ENCODE measurements at regions of chr4 and their contacts with region 1.

Region 1: GRCh38 chr4:128287871-128288688 is 467 bp upstream of the PGRMC2 start:
- DNase-seq: peak; percentile 97 to 99 (median 99)
- H3K4me3 ChIP-seq: peak overlapping the region; percentile 71 to 81 (median 73)
- H3K4me3 Mint-ChIP-seq: peak overlapping the region; percentile 88 to 94
- H3K27ac ChIP-seq: peak overlapping the region; percentile 77 to 83
- H3K27ac Mint-ChIP-seq: peak overlapping the region; percentile 82 to 95 (median 94)
- H3K4me1 ChIP-seq: peaks cover 20 to 33% of the 10 kb centered on the region in 2 donors
- H3K4me1 Mint-ChIP-seq: peaks cover 29% of the 10 kb centered on the region
- H3K27me3 ChIP-seq: no peaks in the 10 kb centered on the region
- H3K27me3 Mint-ChIP-seq: peaks cover 0 to 5% (median 2%) of the 10 kb centered on the region in 3 donors
- CTCF ChIP-seq: no peak

Region 2: GRCh38 chr4:127632420-127633403 is 655.4 kb before region 1 on chr4 and contains the start of gene INTU:
- intact Hi-C with region 1: loop called in 1 of 2 experiments (anchors 10 kb)
- DNase-seq: peak; percentile 59 to 85 (median 81)
- H3K4me3 ChIP-seq: peak within 1 kb of the TSS; percentile 63 to 95 (median 94)
- H3K4me3 Mint-ChIP-seq: peak within 1 kb of the TSS; percentile 95 to 99
- H3K27ac ChIP-seq: peak within 1 kb of the TSS in 1 of 2 donors; percentile 38
- H3K27ac Mint-ChIP-seq: peak within 1 kb of the TSS in 6 of 7 donors; percentile 22 to 87 (median 80)
- H3K4me1 ChIP-seq: peaks cover 12 to 23% of the 10 kb centered on the region in 2 donors
- H3K4me1 Mint-ChIP-seq: peaks cover 22% of the 10 kb centered on the region
- H3K27me3 ChIP-seq: no peaks in the 10 kb centered on the region
- H3K27me3 Mint-ChIP-seq: peaks cover 1 to 4% (median 3%) of the 10 kb centered on the region in 3 donors
- CTCF ChIP-seq: no peak
- polyA plus RNA-seq, gene INTU: 0.17 to 0.26 TPM in 2 of 3 donors, not detected in the other

Region 3: GRCh38 chr4:127965062-127965802 is 322.8 kb before region 1 on chr4 and contains the starts of genes ABHD18 and MFSD8:
- intact Hi-C with region 1: loop called in 1 of 2 experiments (anchors 5 kb)
- DNase-seq: peak; percentile 100
- H3K4me3 ChIP-seq: peak within 1 kb of the TSS; percentile 83 to 96 (median 92)
- H3K4me3 Mint-ChIP-seq: peak within 1 kb of the TSS; percentile 94
- H3K27ac ChIP-seq: peak within 1 kb of the TSS; percentile 91 to 97
- H3K27ac Mint-ChIP-seq: peak within 1 kb of the TSS; percentile 91 to 97 (median 96)
- H3K4me1 ChIP-seq: peaks cover 12 to 17% of the 10 kb centered on the region in 2 donors
- H3K4me1 Mint-ChIP-seq: peaks cover 26% of the 10 kb centered on the region
- H3K27me3 ChIP-seq: no peaks in the 10 kb centered on the region
- H3K27me3 Mint-ChIP-seq: no peaks in the 10 kb centered on the region
- CTCF ChIP-seq: peak; percentile 45
- polyA plus RNA-seq, gene ABHD18: 6.1 to 9.5 (median 6.4) TPM
- polyA plus RNA-seq, gene MFSD8: 7.0 to 15.8 (median 14.2) TPM

Region 4: DNA sequence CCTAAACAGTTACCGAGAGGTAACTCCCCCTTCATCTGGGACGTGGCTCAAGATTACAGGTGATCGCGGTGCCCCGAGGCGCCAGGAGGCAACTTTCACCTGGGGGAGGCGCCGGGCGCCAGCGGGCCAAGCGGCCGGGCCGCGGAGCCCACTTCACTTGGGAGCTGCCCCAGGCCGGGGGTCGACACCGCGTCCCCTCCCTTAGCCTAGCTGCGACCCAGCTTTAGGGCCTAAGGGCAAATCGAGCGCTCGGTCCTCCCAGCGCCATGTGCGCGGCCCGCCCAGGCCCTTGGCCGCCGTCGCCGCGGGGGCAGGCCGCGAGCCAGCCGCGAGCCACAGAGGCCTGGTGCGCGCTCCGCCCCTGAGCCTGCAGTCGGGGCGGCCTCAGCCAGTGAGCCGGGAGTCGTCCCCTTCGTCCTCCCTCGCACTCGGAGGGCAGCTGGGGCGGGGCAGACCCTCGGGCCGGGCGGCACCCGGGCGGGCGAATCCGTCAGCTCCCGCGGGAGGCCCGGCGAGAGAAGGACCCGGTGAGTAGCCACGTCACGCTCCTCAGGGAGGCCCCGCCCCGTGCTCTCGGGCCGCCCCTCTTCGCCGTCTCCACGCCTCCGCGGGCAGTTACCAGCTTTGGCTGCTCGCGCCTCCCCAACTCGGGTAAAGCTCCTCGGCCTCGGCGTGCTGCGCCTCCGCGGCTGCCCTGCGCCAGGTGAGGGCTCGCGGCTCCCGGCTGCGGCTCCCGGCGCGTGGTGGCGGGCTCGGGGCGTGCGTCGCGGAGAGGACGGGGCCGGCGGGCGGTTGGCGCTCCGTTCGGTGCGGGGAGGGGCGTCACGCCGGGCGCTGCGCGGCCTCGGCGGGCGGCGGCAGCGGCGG is 227.1 kb before region 1 on chr4 and contains the start of gene LARP1B:
- intact Hi-C with region 1: loop called in 1 of 2 experiments (anchors 5 kb)
- DNase-seq: peak; percentile 85 to 89 (median 85)
- H3K4me3 ChIP-seq: peak within 1 kb of the TSS; percentile 51 to 82 (median 52)
- H3K4me3 Mint-ChIP-seq: peak within 1 kb of the TSS; percentile 85 to 92
- H3K27ac ChIP-seq: peak within 1 kb of the TSS; percentile 55 to 75
- H3K27ac Mint-ChIP-seq: peak within 1 kb of the TSS; percentile 71 to 92 (median 87)
- H3K4me1 ChIP-seq: peaks cover 10 to 20% of the 10 kb centered on the region in 2 donors
- H3K4me1 Mint-ChIP-seq: peaks cover 13% of the 10 kb centered on the region
- H3K27me3 ChIP-seq: no peaks in the 10 kb centered on the region
- H3K27me3 Mint-ChIP-seq: peaks cover 0 to 5% (median 2%) of the 10 kb centered on the region in 3 donors
- CTCF ChIP-seq: no peak
- polyA plus RNA-seq, gene LARP1B: 3.0 to 5.7 (median 3.7) TPM

Region 5: DNA sequence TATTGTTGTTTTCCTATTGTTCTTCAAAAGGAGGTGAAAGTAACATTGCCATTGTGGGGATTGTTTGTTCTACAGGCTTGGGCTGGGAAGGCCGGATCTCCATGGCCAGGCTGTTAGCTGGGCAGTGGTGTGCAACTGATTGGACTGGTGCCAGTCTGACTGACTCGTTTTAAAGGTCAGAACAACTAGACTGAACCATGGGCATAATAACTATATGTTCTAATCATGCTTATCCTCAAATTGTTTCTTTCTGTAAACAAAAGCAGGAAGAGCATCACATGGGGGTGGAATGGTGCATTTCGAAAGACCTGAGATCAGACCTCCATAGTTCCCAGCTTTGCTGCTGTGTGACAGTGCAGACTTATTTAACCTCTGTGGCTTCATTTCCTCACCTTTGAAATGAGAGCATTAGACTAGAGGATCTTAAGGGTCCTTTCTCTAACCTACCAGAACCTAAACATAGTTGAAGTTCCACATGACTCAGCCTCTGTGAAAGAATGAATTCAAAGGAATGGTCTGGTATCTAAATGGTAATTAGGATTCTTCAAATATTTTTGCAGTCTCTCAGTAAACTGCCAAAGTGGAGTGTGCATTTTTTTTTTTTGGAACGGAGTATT is 66.2 kb after region 1 on chr4:
- intact Hi-C with region 1: no loop called
- DNase-seq: no peak
- H3K4me3 ChIP-seq: no peak overlapping the region
- H3K4me3 Mint-ChIP-seq: no peak overlapping the region
- H3K27ac ChIP-seq: no peak overlapping the region
- H3K27ac Mint-ChIP-seq: no peak overlapping the region
- H3K4me1 ChIP-seq: no peaks in the 10 kb centered on the region
- H3K4me1 Mint-ChIP-seq: no peaks in the 10 kb centered on the region
- H3K27me3 ChIP-seq: no peaks in the 10 kb centered on the region
- H3K27me3 Mint-ChIP-seq: peaks cover 0 to 3% (median 0%) of the 10 kb centered on the region in 3 donors
- CTCF ChIP-seq: no peak

Region 6: DNA sequence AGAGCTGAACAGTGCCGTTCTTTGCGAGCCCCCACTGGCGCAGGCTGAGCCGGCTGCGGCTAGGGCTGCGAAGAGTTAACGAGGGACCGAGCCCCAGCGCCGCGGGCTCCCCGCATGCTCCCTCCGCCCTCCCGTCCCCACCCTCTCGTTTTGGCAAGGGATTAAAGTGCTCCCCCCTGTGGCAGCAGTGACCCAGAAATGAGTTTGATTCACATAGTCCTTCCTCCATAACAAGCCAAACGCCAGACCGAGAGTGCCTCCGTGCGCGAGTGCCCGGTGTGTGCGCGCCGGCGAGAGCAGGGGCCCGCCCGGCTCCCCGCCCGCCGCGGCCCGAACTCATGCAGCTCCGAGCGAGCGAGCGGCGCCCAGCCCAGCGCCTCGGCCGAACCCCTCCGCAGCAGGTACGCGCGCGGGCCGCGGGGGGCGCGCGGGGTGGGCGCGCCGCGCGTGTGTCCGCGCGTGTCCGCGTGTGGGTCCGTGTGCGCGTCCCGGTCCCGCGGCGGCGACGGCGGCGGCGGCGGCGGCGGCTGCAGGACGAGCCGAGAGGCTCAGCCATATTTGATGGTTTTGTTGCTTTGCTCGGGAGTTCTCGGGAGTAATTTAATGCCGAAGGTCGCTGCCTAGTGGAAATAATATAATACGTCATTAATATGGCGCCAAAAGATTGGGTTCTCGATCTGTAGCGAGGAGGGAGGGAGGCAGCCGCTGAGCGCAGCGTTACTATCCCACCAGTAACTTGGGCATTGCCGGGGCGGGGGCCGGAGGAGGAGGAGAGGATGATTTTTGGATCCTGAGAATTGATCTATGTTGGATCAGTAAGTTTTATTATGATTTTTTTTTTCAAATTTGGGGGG is 521.6 kb after region 1 on chr4 and contains the start of gene JADE1:
- intact Hi-C with region 1: loop called in 1 of 2 experiments (anchors 5 kb)
- DNase-seq: peak; percentile 82 to 83 (median 83)
- H3K4me3 ChIP-seq: peak within 1 kb of the TSS; percentile 63 to 99 (median 99)
- H3K4me3 Mint-ChIP-seq: peak within 1 kb of the TSS; percentile 97 to 99
- H3K27ac ChIP-seq: peak within 1 kb of the TSS; percentile 64 to 74
- H3K27ac Mint-ChIP-seq: peak within 1 kb of the TSS; percentile 82 to 97 (median 91)
- H3K4me1 ChIP-seq: peaks cover 19 to 31% of the 10 kb centered on the region in 2 donors
- H3K4me1 Mint-ChIP-seq: peaks cover 23% of the 10 kb centered on the region
- H3K27me3 ChIP-seq: no peaks in the 10 kb centered on the region
- H3K27me3 Mint-ChIP-seq: no peaks in the 10 kb centered on the region
- CTCF ChIP-seq: peak; percentile 55
- polyA plus RNA-seq, gene JADE1: 7.3 to 12.8 (median 12.3) TPM

Measured in CD14-positive monocyte (primary cell).